Activated B cell treated with CpG ODN at 0.5 μM for 24 hours (primary cell): ENCODE measurements at regions of chr1 and their contacts with region 1.

Region 1: GRCh38 chr1:202625416-202626360 is 84.6 kb downstream of the SYT2 start:
- DNase-seq: peak; percentile 56
- ATAC-seq: peak; percentile 84
- H3K4me3 Mint-ChIP-seq: no peak overlapping the region
- H3K27ac Mint-ChIP-seq: no peak overlapping the region
- H3K4me1 Mint-ChIP-seq: peaks cover 50% of the 10 kb centered on the region
- H3K27me3 Mint-ChIP-seq: peaks cover 10% of the 10 kb centered on the region
- CTCF ChIP-seq: no peak

Region 2: DNA sequence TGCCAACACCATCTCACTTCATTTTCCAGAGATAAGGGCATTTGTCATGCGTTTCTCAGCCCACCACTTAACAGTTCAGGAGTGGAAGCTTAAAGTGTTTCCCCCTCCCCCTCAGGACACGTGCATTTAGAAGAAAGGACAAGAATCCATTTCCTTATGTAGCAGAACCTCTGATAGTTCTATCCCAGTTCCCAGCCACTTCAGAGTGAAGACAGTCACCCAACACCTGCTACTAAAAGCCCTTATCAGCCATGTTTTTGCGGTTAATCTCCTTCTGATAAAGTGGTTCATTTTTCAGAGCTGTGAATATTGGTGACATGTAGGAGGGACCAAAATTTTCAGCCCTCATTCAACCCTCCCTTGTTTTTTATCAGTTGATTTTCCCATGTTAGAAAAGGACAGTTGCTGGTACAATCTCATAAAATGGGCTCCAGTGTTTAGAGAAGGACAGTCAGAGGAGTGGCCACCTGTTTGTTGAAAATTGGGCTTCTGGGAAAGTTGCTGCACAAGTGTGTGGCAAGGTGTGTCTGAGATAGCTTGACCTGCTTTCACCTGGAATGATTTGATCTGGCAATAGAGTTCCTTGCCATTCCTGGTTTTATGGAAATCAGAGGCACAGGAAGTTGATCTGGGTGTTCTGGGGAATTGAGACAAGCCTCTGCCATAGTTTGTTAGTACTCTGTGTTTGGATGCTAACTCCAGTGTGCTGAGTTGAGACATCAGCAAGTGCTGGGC is 163.2 kb before region 1 on chr1:
- CTCF ChIA-PET with region 1: no interaction called
- POLR2A ChIA-PET with region 1: no interaction called
- intact Hi-C with region 1: loop called (anchors 2 kb)
- DNase-seq: no peak
- ATAC-seq: no peak
- H3K4me3 Mint-ChIP-seq: no peak overlapping the region
- H3K27ac Mint-ChIP-seq: no peak overlapping the region
- H3K4me1 Mint-ChIP-seq: no peaks in the 10 kb centered on the region
- H3K27me3 Mint-ChIP-seq: no peaks in the 10 kb centered on the region
- CTCF ChIP-seq: no peak

Region 3: GRCh38 chr1:202501281-202501680 is 124.4 kb before region 1 on chr1:
- CTCF ChIA-PET with region 1: interaction called, 6 read pairs
- POLR2A ChIA-PET with region 1: no interaction called
- intact Hi-C with region 1: loop called (anchors 1 kb)
- DNase-seq: no peak
- ATAC-seq: no peak
- H3K4me3 Mint-ChIP-seq: no peak overlapping the region
- H3K27ac Mint-ChIP-seq: no peak overlapping the region
- H3K4me1 Mint-ChIP-seq: no peaks in the 10 kb centered on the region
- H3K27me3 Mint-ChIP-seq: no peaks in the 10 kb centered on the region
- CTCF ChIP-seq: no peak

Region 4: GRCh38 chr1:202571347-202572339 is 54.0 kb before region 1 on chr1:
- CTCF ChIA-PET with region 1: interaction called, 3 read pairs
- POLR2A ChIA-PET with region 1: no interaction called
- intact Hi-C with region 1: loop called (anchors 5 kb)
- DNase-seq: no peak
- ATAC-seq: peak; percentile 52
- H3K4me3 Mint-ChIP-seq: no peak overlapping the region
- H3K27ac Mint-ChIP-seq: no peak overlapping the region
- H3K4me1 Mint-ChIP-seq: peaks cover 8% of the 10 kb centered on the region
- H3K27me3 Mint-ChIP-seq: no peaks in the 10 kb centered on the region
- CTCF ChIP-seq: peak; percentile 18

Region 5: DNA sequence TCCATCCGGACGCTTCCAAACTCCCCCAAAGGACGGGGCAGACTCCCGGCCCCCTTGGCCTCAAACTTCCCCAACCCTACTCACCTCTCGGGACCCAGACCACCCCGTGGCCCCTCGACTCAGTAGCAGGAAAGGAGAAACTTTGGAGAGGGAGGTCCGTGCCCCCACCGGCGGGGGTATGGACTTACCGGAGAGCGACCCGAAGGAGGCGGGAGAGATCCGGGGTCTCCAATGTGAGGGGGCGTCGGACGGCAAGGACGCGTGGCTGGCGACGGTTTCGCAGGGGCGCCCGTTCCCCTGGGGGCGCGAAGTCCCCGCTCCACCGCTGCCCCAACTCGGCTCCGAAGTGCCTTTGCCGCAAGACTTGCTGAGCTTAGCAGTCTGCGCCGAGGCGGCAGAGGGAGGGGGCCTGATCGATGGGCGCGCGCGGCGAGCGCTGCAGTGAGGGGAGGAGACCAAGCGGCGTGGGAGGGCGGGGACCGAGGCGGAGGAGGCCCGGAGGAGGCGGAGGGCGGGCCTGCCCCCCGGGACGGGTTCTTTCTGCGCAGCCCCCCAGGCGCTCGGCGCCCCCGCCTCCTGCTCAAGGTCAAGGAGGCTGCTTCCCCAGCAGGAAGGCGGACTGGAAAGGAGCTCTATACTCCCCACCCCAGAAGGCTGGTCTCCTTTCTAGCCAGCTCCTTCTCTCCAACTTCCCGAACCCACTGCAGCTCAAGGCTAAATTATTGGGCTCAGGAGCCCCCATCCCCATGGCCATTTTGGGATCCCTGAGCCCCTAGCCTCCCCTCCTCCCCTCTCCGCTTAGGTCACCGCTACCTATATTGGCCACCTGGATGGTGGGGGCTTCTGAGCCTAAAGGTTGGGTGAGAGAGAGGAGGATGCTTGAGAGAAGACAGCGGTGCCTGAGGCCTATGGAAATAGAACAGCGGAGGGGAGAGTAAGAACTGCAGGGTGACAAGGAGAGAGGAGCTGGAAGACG is 84.7 kb after region 1 on chr1 and contains the start of gene SYT2:
- CTCF ChIA-PET with region 1: no interaction called
- POLR2A ChIA-PET with region 1: no interaction called
- intact Hi-C with region 1: loop called (anchors 10 kb)
- DNase-seq: no peak
- ATAC-seq: peak; percentile 34
- H3K4me3 Mint-ChIP-seq: peak within 1 kb of the TSS; percentile 30
- H3K27ac Mint-ChIP-seq: no peak within 1 kb of the TSS
- H3K4me1 Mint-ChIP-seq: peaks cover 6% of the 10 kb centered on the region
- H3K27me3 Mint-ChIP-seq: peaks cover 65% of the 10 kb centered on the region
- CTCF ChIP-seq: no peak
- total RNA-seq, gene SYT2: not detected in 2 replicates